CD14-positive monocyte (primary cell): ENCODE measurements at regions of chr1 and their contacts with region 1.

Region 1: DNA sequence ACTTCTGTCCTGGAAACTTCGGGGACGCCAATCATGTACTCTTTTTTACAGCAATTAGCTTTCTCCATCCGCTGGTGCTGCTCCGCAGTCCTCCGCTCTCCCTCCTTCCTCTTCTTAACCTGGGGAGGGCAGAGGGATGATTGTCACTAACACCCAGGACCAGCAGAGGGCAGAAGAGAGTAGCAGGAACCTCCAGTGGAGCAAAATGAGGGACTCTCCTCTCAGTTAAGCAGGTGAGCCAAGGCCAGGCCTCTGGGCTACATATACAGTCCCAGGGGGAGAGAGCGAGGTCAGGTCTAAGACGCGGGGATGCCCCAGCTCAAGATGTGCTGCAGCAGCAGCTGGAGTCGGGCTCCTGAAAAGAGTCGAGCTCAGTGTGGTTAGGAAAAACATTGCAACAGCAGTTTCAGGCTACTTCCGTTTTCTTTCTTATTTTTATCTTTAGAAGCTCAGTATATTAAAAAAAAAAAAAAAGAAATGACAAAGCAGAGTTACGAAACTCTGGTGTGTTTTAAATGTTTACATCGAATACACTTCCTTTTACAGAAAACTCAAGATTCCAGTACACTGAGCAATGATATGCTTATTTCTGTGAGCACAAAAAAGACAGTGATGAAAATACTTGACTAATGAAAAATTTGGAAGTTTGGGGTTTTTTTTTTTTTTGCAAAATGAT is 25.7 kb upstream of the NLRP3 start:
- DNase-seq: peak; percentile 92 to 99 (median 98)
- H3K4me3 ChIP-seq: peak overlapping the region; percentile 18 to 66 (median 33)
- H3K4me3 Mint-ChIP-seq: peak overlapping the region; percentile 71 to 91
- H3K27ac ChIP-seq: peak overlapping the region; percentile 84 to 85
- H3K27ac Mint-ChIP-seq: peak overlapping the region; percentile 94 to 99 (median 95)
- H3K4me1 ChIP-seq: peaks cover 51 to 57% of the 10 kb centered on the region in 2 donors
- H3K4me1 Mint-ChIP-seq: peaks cover 52% of the 10 kb centered on the region
- H3K27me3 ChIP-seq: no peaks in the 10 kb centered on the region
- H3K27me3 Mint-ChIP-seq: peaks cover 0 to 3% (median 0%) of the 10 kb centered on the region in 3 donors
- CTCF ChIP-seq: peak; percentile 96

Region 2: DNA sequence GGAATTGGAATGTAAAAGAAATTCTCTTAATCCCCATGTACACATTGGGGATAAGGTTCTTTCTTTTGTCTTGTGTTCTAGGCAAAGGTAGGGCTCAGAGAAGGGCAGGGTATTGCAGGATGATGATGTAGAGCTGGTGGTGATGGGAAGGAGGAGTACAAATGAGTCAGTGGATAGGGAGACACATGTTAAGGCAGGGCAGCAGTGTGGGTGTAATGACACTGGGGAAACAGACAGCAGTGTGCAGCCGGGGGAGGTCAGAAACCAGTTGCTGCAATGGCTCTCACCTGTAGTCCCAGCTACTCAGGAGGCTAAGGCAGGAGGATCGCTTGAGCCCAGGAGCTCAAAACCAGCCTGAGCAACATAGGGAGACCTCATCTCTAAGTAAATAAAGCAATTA is 30.8 kb after region 1 on chr1:
- intact Hi-C with region 1: loop called (anchors 5 kb)
- DNase-seq: peak in 2 of 3 donors; percentile 41 to 59
- H3K4me3 ChIP-seq: peak overlapping the region; percentile 79 to 100 (median 96)
- H3K4me3 Mint-ChIP-seq: peak overlapping the region; percentile 92 to 95
- H3K27ac ChIP-seq: peak overlapping the region; percentile 4 to 79
- H3K27ac Mint-ChIP-seq: peak overlapping the region; percentile 57 to 99 (median 88)
- H3K4me1 ChIP-seq: peaks cover 72 to 83% of the 10 kb centered on the region in 2 donors
- H3K4me1 Mint-ChIP-seq: peaks cover 74% of the 10 kb centered on the region
- H3K27me3 ChIP-seq: no peaks in the 10 kb centered on the region
- H3K27me3 Mint-ChIP-seq: peaks cover 0 to 4% (median 0%) of the 10 kb centered on the region in 3 donors
- CTCF ChIP-seq: no peak

Region 3: GRCh38 chr1:247440001-247440620 is 49.9 kb after region 1 on chr1:
- intact Hi-C with region 1: loop called in 1 of 2 experiments (anchors 5 kb)
- DNase-seq: peak; percentile 82 to 90 (median 87)
- H3K4me3 ChIP-seq: no peak overlapping the region
- H3K4me3 Mint-ChIP-seq: peak overlapping the region in 1 of 2 donors; percentile 6
- H3K27ac ChIP-seq: peak overlapping the region; percentile 86 to 89
- H3K27ac Mint-ChIP-seq: peak overlapping the region; percentile 95 to 100 (median 98)
- H3K4me1 ChIP-seq: peaks cover 81 to 86% of the 10 kb centered on the region in 2 donors
- H3K4me1 Mint-ChIP-seq: peaks cover 91% of the 10 kb centered on the region
- H3K27me3 ChIP-seq: no peaks in the 10 kb centered on the region
- H3K27me3 Mint-ChIP-seq: peaks cover 0 to 5% (median 0%) of the 10 kb centered on the region in 3 donors
- CTCF ChIP-seq: no peak